Breast epithelium (tissue), 4 donors: ENCODE measurements at regions of chr2 and their contacts with region 1.

Region 1: GRCh38 chr2:192137451-192137850 is 57.3 kb downstream of the TMEFF2 start:
- DNase-seq: no peak
- H3K4me3 ChIP-seq: no peak overlapping the region
- H3K27ac ChIP-seq: no peak overlapping the region
- H3K4me1 ChIP-seq: no peaks in the 10 kb centered on the region
- H3K27me3 ChIP-seq: no peaks in the 10 kb centered on the region
- CTCF ChIP-seq: no peak
- POLR2A ChIP-seq: no peak

Region 2: GRCh38 chr2:190679813-190680591 is 1457.4 kb before region 1 on chr2:
- intact Hi-C with region 1: loop called (anchors 10 kb)
- DNase-seq: peak; percentile 24 to 59
- H3K4me3 ChIP-seq: no peak overlapping the region
- H3K27ac ChIP-seq: peak overlapping the region in 1 of 2 donors; percentile 15
- H3K4me1 ChIP-seq: no peaks in the 10 kb centered on the region
- H3K27me3 ChIP-seq: no peaks in the 10 kb centered on the region
- CTCF ChIP-seq: peak in 2 of 3 donors; percentile 25 to 43
- POLR2A ChIP-seq: no peak

Region 3: DNA sequence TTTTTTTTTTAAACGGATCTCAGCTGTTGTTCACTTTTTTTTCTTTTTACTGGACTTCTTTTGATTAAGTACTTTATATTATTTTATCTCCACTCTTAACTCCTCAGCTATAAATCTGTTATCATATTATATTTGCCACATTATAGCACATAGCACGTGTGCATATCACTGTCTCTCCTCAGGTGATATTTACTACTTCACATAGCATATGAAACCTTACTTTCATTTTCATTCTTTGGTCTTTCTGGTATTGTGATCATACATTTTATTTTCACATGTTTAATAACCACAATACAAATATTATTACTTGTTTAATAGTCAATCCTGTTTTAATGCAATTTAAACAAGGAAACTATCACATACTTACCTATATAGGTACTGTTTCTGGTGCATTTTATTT is 1050.4 kb after region 1 on chr2:
- intact Hi-C with region 1: no loop called
- DNase-seq: no peak
- H3K4me3 ChIP-seq: peak overlapping the region in 2 of 3 donors; percentile 3 to 6
- H3K27ac ChIP-seq: no peak overlapping the region
- H3K4me1 ChIP-seq: no peaks in the 10 kb centered on the region
- H3K27me3 ChIP-seq: no peaks in the 10 kb centered on the region
- CTCF ChIP-seq: no peak
- POLR2A ChIP-seq: no peak